Gastrocnemius medialis (tissue), 4 donors: ENCODE measurements at regions of chr5 and their contacts with region 1.

Region 1: GRCh38 chr5:134370871-134371833 is at the start of gene UBE2B:
- DNase-seq: peak; percentile 99
- ATAC-seq: peak; percentile 89 to 92
- H3K4me3 ChIP-seq: peak within 1 kb of the TSS; percentile 92 to 98 (median 95)
- H3K27ac ChIP-seq: peak within 1 kb of the TSS; percentile 97 to 100 (median 98)
- H3K4me1 ChIP-seq: peaks cover 57 to 59% of the 10 kb centered on the region in 2 donors
- H3K27me3 ChIP-seq: no peaks in the 10 kb centered on the region
- CTCF ChIP-seq: peak in 2 of 5 experiments; percentile 57 to 65
- POLR2A ChIP-seq: peak; percentile 89
- total RNA-seq, gene UBE2B: 22.2 to 124 (median 70.3) TPM

Region 2: GRCh38 chr5:134225618-134226440 is 145.3 kb before region 1 on chr5 and contains the start of gene PPP2CA:
- in situ Hi-C with region 1: no loop called
- intact Hi-C with region 1: loop called (anchors 1 kb)
- DNase-seq: peak; percentile 97 to 99
- ATAC-seq: peak; percentile 87 to 88
- H3K4me3 ChIP-seq: peak within 1 kb of the TSS; percentile 67 to 93 (median 86)
- H3K27ac ChIP-seq: peak within 1 kb of the TSS; percentile 95 to 100 (median 99)
- H3K4me1 ChIP-seq: peaks cover 44 to 54% of the 10 kb centered on the region in 2 donors
- H3K27me3 ChIP-seq: no peaks in the 10 kb centered on the region
- CTCF ChIP-seq: no peak
- POLR2A ChIP-seq: peak; percentile 93 to 96
- total RNA-seq, gene PPP2CA: 90.2 to 179 (median 155) TPM

Region 3: DNA sequence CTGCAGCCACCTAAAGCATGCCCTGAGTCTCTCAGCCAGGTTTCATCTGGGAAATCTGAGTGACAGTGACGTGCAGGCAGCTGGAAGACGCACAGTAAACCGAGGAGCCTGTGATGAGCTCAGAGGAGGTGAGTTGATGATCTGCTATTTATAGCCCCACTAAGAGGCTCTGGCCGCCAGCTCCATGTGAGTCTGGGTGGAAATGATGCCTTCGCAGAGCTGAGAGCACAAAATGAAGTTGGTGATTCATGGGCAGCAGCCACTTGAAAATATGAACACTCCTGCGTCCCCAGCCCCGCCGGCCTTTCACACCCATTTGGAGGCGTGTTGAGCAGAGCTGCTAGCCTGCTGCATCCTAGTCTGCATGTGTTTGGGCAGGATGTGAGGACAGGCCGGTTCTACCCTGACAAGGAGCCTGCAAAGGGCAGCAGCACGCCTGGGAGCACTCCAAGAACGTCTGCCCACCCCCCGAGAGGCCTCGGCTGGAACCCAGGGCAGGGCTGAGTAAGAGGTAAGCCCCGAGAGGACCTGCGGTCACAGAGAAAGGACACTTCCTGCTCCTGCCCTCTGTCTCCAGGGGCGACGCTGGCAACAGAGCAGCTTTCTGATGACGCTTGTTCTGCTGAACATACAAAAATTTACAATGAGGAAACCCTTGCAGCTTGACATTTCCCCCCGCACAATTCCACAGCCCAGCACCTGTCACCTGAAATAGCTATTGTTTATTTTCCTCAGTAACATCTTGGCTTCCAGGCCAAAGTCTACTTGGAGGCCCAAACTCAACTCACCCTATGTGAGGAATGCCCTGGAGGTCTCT is 65.6 kb after region 1 on chr5:
- in situ Hi-C with region 1: no loop called
- intact Hi-C with region 1: loop called (anchors 1 kb)
- DNase-seq: peak; percentile 90 to 96
- ATAC-seq: peak; percentile 77 to 83
- H3K4me3 ChIP-seq: peak overlapping the region; percentile 25 to 46 (median 32)
- H3K27ac ChIP-seq: peak overlapping the region; percentile 97 to 99 (median 98)
- H3K4me1 ChIP-seq: peaks cover 70 to 72% of the 10 kb centered on the region in 2 donors
- H3K27me3 ChIP-seq: no peaks in the 10 kb centered on the region
- CTCF ChIP-seq: no peak
- POLR2A ChIP-seq: peak; percentile 21 to 52

Region 4: DNA sequence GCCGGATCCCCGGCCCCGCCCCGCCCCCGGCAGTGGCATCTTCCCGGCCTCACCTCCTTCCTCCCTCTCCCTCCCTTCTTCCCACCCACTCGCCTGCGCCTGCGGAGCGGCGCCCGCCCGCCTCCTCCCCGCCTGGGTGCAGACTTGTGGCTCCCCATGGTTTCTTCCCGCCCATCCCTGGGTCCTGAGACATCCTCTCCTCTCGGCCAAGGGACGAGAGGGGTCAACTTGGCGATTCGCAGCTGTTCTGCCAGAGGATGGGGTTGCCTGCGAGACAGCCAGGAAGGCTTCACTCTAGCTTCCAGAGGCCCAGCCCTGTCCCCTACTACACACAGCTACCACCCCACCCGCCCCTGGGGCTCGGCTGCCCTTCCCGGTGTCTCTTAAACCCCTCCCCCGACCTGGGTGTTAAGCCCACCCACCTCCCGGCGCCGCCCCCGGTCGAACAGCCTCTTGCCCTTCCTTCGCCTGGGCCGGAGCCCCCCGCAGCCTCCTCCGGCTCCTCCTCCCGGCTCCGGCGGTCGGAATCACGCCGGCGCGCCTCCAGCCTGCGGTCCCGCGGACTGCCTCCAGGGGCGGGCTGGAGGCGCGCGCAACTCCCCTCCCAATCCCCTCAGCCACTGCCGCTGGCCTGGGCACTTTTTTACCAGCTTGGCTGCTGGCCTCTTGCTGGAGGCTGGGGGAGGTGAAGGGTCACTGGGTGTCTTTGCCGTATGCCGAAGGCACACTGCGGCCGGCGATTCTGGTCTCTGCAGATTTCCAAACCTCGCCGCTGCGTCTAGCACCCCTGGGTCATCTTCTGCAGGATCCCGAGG is 156.2 kb after region 1 on chr5:
- in situ Hi-C with region 1: no loop called
- intact Hi-C with region 1: loop called (anchors 1 kb)
- DNase-seq: peak; percentile 62 to 78
- ATAC-seq: peak; percentile 39 to 42
- H3K4me3 ChIP-seq: peak overlapping the region; percentile 71 to 78 (median 72)
- H3K27ac ChIP-seq: peak overlapping the region; percentile 93 to 97 (median 96)
- H3K4me1 ChIP-seq: peaks cover 44 to 49% of the 10 kb centered on the region in 2 donors
- H3K27me3 ChIP-seq: no peaks in the 10 kb centered on the region
- CTCF ChIP-seq: peak; percentile 96 to 98 (median 97)
- POLR2A ChIP-seq: peak; percentile 54 to 59

Region 5: GRCh38 chr5:134586866-134587524 is 215.8 kb after region 1 on chr5:
- in situ Hi-C with region 1: loop called in 1 of 4 experiments (anchors 10 kb)
- intact Hi-C with region 1: no loop called
- DNase-seq: peak; percentile 43 to 77
- ATAC-seq: peak; percentile 42 to 63
- H3K4me3 ChIP-seq: no peak overlapping the region
- H3K27ac ChIP-seq: peak overlapping the region in 3 of 4 donors; percentile 5 to 65 (median 13)
- H3K4me1 ChIP-seq: peaks cover 30 to 43% of the 10 kb centered on the region in 2 donors
- H3K27me3 ChIP-seq: no peaks in the 10 kb centered on the region
- CTCF ChIP-seq: peak; percentile 63 to 84 (median 81)
- POLR2A ChIP-seq: no peak

Region 6: DNA sequence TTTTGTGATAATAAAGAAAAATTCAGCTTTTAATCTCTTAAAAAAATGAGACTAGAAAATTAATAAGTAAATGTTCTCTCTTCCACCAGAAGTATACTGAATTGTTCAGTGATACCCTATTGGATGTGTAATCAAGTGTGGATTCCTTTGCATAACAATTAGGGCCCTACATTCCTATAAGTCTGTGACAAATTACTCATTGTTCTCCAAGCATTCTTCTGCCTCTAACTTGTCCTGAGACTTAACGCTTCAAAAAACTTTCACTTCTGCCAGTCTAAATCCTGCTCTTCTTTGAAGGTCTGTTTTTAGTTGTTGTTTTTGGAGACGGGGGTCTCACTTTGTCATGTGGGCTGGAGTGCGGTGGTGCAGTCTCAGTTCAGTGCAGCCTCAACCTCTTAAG is 378.3 kb after region 1 on chr5:
- in situ Hi-C with region 1: no loop called
- intact Hi-C with region 1: loop called (anchors 10 kb)
- DNase-seq: no peak
- ATAC-seq: no peak
- H3K4me3 ChIP-seq: no peak overlapping the region
- H3K27ac ChIP-seq: no peak overlapping the region
- H3K4me1 ChIP-seq: no peaks in the 10 kb centered on the region
- H3K27me3 ChIP-seq: no peaks in the 10 kb centered on the region
- CTCF ChIP-seq: no peak
- POLR2A ChIP-seq: no peak